Calu3 (cell line): ENCODE measurements at regions of chr6 and their contacts with region 1.

Region 1: DNA sequence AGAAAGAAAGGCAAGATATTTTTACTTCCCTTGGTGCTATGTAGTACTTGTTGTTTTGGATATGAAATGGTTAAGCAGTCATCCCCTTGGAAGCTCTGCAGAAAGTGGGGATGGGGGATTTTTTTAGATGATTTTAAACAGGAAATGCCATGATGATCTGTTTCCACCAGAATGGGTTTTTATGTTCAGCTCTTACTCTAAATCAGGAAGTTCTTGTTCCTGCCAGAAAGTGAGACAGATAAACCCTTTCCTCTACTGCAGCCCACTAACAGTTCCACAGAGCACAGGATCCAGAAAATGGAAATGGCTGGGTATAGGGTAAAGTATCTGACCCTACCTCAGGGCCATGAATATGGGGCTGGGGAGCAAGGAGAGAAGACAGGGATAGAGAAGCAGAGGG is 32.1 kb upstream of the PPP1R3G start:
- DNase-seq: no peak
- H3K4me3 Mint-ChIP-seq: no peak overlapping the region
- H3K27ac Mint-ChIP-seq: no peak overlapping the region
- H3K4me1 Mint-ChIP-seq: no peaks in the 10 kb centered on the region
- H3K27me3 Mint-ChIP-seq: peaks cover 28% of the 10 kb centered on the region
- CTCF ChIP-seq: no peak

Region 2: DNA sequence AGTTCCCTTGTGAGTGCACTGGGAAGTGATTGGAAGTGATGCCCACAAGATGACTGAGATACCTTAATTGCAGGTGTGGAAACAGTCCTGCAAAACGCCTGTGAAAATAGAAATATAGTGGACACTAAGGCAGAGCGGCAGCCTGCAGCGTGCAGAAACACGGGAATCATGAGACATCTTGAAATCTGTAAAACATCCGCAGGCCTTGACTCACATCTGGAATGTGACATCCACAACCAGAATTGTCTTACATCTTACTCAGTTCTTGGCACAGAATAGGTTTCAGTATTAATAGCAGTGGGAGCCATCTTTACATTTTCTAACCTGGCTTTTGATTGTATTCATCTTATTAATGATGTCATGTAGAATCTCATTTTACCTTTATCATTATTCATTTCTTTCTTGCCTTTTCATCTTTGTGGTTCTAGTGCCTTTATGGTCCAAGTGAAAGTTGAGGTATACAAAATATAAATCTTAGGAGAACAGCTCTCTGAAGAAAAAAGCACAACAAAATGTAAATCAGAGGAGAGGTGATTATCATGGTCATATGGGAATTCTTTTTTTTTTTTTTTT is 232.2 kb before region 1 on chr6:
- CTCF ChIA-PET with region 1: no interaction called
- intact Hi-C with region 1: no loop called
- DNase-seq: no peak
- H3K4me3 Mint-ChIP-seq: no peak overlapping the region
- H3K27ac Mint-ChIP-seq: no peak overlapping the region
- H3K4me1 Mint-ChIP-seq: no peaks in the 10 kb centered on the region
- H3K27me3 Mint-ChIP-seq: no peaks in the 10 kb centered on the region
- CTCF ChIP-seq: no peak

Region 3: DNA sequence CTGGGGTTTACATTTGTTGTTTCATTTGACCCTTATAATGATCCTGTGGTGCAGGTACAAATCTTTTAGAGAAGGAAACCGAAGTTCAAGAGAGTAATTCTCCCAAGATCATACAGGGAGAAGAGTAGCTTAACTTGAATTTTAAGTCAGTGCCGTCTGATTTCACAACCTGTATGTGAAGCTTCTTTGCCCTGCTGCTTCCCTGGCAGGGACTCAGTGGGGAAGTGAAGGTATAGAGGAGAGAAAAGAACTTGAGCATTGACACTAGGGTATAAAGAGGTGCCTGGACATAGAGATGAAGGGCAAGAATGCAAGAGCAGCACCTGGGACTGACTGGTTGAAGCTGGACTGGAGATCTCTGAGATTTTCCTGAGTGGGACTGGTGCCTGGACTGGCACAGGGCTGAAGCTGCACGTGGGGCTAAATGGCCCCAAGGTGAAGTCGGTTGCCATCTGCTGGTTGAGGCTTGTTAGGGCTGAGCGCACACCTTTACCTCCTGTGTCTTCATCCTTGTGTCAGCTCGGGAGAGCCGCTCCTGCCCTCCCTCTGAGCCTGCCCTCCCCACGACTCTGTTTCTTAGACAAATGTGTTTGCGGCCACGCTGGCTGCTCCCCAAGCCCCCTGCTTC is 250.1 kb after region 1 on chr6:
- CTCF ChIA-PET with region 1: no interaction called
- intact Hi-C with region 1: loop called (anchors 10 kb)
- DNase-seq: peak; percentile 51
- H3K4me3 Mint-ChIP-seq: no peak overlapping the region
- H3K27ac Mint-ChIP-seq: no peak overlapping the region
- H3K4me1 Mint-ChIP-seq: peaks cover 16% of the 10 kb centered on the region
- H3K27me3 Mint-ChIP-seq: no peaks in the 10 kb centered on the region
- CTCF ChIP-seq: peak; percentile 29

Region 4: GRCh38 chr6:5401845-5402738 is 349.1 kb after region 1 on chr6:
- CTCF ChIA-PET with region 1: no interaction called
- intact Hi-C with region 1: loop called (anchors 2 kb)
- DNase-seq: no peak
- H3K4me3 Mint-ChIP-seq: no peak overlapping the region
- H3K27ac Mint-ChIP-seq: no peak overlapping the region
- H3K4me1 Mint-ChIP-seq: no peaks in the 10 kb centered on the region
- H3K27me3 Mint-ChIP-seq: no peaks in the 10 kb centered on the region
- CTCF ChIP-seq: peak; percentile 30